B cell (primary cell): ENCODE measurements at regions of chr11 and their contacts with region 1.

Region 1: DNA sequence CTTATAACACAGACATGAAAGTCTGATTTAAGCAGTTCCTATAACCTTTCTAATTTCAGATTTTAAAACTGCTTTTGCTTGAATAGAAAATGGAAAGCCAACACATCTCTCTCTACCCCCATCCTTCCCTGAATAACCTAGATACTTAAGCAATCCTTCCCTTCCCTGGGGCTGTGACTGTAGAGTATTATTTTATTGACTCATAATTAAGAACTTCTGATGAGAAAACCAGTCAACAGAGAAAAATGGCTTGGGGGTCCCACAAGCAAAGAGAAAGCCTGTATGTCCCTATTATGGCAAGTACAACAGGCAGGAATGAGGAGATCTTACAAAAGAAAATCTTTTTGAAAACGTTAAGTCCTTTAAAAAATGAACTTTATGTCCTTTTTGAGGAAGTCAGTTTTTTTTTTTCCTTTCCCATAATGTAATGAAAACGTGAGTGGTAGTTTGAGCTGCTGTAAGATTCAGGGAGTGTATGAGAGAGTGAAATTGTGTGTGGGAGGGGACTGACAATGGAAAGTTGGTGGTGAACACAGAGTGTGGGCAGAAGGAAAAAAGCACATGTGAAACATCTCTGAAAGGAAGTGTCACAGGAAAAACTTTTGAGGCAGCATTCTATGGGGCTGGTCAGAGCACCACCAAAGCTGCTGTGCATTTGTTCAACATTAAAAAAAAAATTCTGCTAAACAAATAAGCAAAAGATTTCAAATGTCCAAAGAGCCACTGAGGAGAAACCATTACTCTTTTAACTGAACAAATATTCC is 154.6 kb downstream of the MAML2 start:
- DNase-seq: peak; percentile 20
- ATAC-seq: peak; percentile 45
- H3K4me3 ChIP-seq: no peak overlapping the region
- H3K4me3 Mint-ChIP-seq: peak overlapping the region; percentile 57
- H3K27ac ChIP-seq: peak overlapping the region in 1 of 2 donors; percentile 68
- H3K27ac Mint-ChIP-seq: peak overlapping the region; percentile 54
- H3K4me1 ChIP-seq: peaks cover 42 to 56% of the 10 kb centered on the region in 2 donors
- H3K4me1 Mint-ChIP-seq: peaks cover 72% of the 10 kb centered on the region
- H3K27me3 ChIP-seq: no peaks in the 10 kb centered on the region
- H3K27me3 Mint-ChIP-seq: no peaks in the 10 kb centered on the region
- CTCF ChIP-seq: no peak

Region 2: GRCh38 chr11:96134602-96135001 is 53.8 kb before region 1 on chr11:
- CTCF ChIA-PET with region 1: no interaction called
- POLR2A ChIA-PET with region 1: no interaction called
- intact Hi-C with region 1: loop called (anchors 5 kb)
- DNase-seq: peak; percentile 78
- ATAC-seq: peak; percentile 80
- H3K4me3 ChIP-seq: no peak overlapping the region
- H3K4me3 Mint-ChIP-seq: no peak overlapping the region
- H3K27ac ChIP-seq: peak overlapping the region; percentile 31 to 61
- H3K27ac Mint-ChIP-seq: peak overlapping the region; percentile 79
- H3K4me1 ChIP-seq: peaks cover 16 to 36% of the 10 kb centered on the region in 2 donors
- H3K4me1 Mint-ChIP-seq: peaks cover 44% of the 10 kb centered on the region
- H3K27me3 ChIP-seq: no peaks in the 10 kb centered on the region
- H3K27me3 Mint-ChIP-seq: no peaks in the 10 kb centered on the region
- CTCF ChIP-seq: no peak

Region 3: GRCh38 chr11:96207459-96208449 is 19.3 kb after region 1 on chr11:
- CTCF ChIA-PET with region 1: no interaction called
- POLR2A ChIA-PET with region 1: no interaction called
- intact Hi-C with region 1: loop called (anchors 2 kb)
- DNase-seq: peak; percentile 42
- ATAC-seq: peak; percentile 65
- H3K4me3 ChIP-seq: peak overlapping the region in 2 of 5 experiments; percentile 2 to 3
- H3K4me3 Mint-ChIP-seq: peak overlapping the region; percentile 72
- H3K27ac ChIP-seq: peak overlapping the region; percentile 54 to 75
- H3K27ac Mint-ChIP-seq: peak overlapping the region; percentile 59
- H3K4me1 ChIP-seq: peaks cover 55 to 64% of the 10 kb centered on the region in 2 donors
- H3K4me1 Mint-ChIP-seq: peaks cover 66% of the 10 kb centered on the region
- H3K27me3 ChIP-seq: no peaks in the 10 kb centered on the region
- H3K27me3 Mint-ChIP-seq: no peaks in the 10 kb centered on the region
- CTCF ChIP-seq: no peak

Region 4: DNA sequence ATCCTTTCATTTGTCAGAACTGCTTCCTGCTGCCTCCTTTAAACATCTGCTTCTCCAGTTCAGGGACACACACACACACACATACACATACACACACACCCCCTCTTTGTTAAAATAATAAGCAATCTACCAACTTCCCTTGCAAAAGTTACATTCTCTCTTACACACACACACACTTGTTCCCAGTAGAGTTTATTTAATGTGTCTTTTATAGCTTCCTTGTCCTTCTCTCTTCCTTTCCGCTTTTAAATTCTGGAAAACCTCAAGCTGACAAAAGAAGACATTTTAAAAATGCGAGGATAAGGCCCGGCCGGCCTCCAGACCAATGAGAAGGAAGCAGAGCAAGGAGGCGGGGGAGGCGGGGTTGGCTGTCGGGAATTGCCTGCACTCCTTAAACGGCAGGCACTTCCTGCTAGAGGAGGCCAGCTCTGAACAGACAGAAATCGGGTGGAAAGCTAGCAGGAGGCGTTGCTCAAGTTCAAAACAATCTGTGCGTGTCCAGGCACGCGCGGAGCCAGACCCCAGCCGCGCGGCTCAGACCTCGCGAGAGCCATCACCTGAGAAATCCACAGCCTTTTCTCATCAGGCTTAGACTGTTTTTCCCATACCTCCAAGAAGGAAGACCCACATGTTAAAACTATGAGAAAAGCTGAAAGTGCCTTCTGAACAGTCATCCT is 54.7 kb after region 1 on chr11:
- CTCF ChIA-PET with region 1: interaction called, 3 read pairs
- POLR2A ChIA-PET with region 1: no interaction called
- intact Hi-C with region 1: loop called (anchors 2 kb)
- DNase-seq: peak; percentile 82
- ATAC-seq: peak; percentile 81
- H3K4me3 ChIP-seq: peak overlapping the region; percentile 50 to 77 (median 62)
- H3K4me3 Mint-ChIP-seq: peak overlapping the region; percentile 93
- H3K27ac ChIP-seq: peak overlapping the region; percentile 72 to 84
- H3K27ac Mint-ChIP-seq: peak overlapping the region; percentile 96
- H3K4me1 ChIP-seq: peaks cover 36 to 37% of the 10 kb centered on the region in 2 donors
- H3K4me1 Mint-ChIP-seq: peaks cover 49% of the 10 kb centered on the region
- H3K27me3 ChIP-seq: no peaks in the 10 kb centered on the region
- H3K27me3 Mint-ChIP-seq: no peaks in the 10 kb centered on the region
- CTCF ChIP-seq: no peak